ENCODE measurements at regions of chr17 and their contacts with region 1.

Region 1: DNA sequence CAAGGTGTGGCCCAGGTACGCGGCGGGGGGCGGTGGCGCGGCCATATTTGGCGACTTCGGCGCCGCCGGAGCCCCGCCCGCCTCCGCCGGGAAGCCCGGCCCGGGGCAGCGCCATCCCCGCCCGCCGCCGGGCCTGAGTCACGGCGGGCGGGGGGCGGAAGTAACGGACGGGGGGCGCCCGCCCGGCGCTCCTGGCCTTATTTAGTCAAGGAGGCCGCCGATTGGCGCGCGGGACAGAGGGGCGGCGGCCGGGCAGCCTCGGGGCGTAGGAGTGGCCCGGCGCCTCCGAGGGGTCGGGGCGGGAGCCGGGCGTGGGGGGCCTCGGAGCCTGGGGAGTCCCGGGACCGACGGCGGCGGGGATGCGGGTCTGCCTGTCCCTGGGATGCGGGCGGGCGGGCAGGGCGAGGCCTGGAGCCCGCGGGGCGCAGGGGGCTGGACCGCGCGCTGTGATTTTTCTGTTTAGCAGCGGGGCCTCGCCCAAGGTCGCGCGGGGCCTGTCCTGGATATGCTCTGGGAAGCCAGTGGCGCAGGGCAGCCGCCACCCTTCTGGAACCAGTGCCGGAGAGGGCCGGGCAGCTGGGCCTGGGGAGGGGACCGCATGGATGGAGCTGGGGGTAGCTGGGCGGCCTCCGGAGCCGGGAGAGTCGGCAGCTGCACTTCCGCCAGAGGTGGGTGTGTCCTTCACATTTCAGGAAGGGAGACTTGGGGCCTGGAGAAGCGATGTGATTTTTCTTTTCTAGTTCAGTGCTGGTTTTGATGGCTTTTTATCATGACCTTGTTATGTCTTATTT is 2.3 kb upstream of the ACTG1 start:
- DNase-seq: peak; percentile 87 to 95 (median 92)
- ATAC-seq: peak; percentile 52 to 55
- H3K4me3 ChIP-seq: peak overlapping the region; percentile 74
- H3K27ac ChIP-seq: peak overlapping the region; percentile 99
- H3K4me1 ChIP-seq: peaks cover 5% of the 10 kb centered on the region
- H3K27me3 ChIP-seq: no peaks in the 10 kb centered on the region

Region 2: GRCh38 chr17:81553018-81553615 is 38.2 kb after region 1 on chr17:
- intact Hi-C with region 1: loop called in 1 of 4 experiments (anchors 5 kb)
- DNase-seq: peak; percentile 62 to 89 (median 77)
- ATAC-seq: peak; percentile 62 to 65
- H3K4me3 ChIP-seq: peak overlapping the region; percentile 58
- H3K27ac ChIP-seq: peak overlapping the region; percentile 69
- H3K4me1 ChIP-seq: peaks cover 11% of the 10 kb centered on the region
- H3K27me3 ChIP-seq: no peaks in the 10 kb centered on the region